Left cardiac atrium (tissue), 4 donors: ENCODE measurements at regions of chr12 and their contacts with region 1.

Region 1: DNA sequence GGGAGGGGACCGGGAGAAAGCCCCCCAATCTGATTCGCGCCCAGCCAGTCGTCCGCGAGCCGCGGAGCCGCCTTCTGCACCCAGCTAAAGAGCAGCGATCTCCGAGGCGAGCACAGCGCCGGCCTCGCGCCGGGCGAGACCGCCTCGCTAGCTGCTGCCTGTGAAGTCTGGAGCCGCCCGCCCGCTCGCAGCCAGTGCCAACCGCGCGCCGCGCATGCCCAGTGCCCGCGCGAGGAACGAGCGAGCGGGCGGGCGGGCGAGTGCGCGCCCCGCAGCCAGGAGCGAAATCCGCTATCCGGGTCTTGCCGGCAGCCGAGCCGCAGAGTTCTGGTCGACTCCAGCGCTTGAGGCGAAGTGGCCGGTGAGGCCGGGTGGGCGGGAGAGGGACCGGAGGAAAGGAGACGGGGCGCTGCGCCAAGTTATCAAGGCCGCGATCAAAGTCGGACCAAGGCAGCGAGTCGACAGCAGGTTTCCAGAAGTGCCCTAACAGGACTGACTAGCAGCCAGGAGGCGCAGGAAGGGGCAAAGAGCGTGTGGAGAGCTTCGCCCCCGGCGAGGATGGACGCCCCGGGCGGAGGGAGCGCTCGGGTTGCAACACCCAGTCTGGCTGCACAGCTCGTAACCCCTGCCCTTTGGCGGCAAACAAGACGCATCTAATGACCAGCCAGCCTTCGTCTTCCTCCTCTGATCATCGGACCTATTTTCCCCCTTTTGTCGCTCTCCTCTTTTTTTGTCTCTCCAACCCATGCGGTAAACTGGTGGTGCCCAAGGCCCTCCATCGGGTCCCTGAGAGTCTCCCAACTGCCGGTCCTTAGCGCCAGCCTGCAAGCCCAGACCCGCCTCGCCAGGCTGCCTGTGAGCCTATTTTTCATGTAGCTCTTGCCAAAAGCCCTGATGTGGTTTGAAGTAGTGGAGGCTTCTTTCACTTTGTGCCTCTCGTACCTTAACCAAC is at the start of gene EPS8:
- DNase-seq: peak; percentile 92
- ATAC-seq: peak; percentile 96 to 97
- total RNA-seq, gene EPS8: 46.0 to 46.9 TPM

Region 2: GRCh38 chr12:15599266-15600037 is 190.0 kb before region 1 on chr12:
- intact Hi-C with region 1: loop called in 1 of 2 experiments (anchors 5 kb)
- DNase-seq: peak; percentile 39
- ATAC-seq: peak; percentile 94 to 96

Region 3: DNA sequence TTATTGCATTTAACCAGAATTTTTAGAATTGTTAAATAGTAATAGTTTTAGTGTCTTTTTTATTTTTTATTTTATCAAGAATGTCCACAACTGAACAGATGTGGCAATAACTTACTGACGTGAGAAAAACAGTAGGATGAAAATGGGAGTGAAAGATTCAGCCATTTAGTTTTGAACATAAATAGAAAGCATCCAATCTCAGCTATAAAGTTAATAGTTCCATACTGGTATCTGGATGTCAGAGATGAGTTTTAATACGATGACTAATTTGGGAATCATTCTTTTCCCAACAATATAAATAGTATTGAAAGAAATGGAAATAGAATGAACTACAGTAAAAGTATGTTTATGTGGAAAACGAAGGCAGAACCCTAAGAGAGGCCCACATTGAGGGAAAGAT is 159.7 kb before region 1 on chr12:
- intact Hi-C with region 1: loop called in 1 of 2 experiments (anchors 10 kb)
- DNase-seq: no peak
- ATAC-seq: no peak

Region 4: DNA sequence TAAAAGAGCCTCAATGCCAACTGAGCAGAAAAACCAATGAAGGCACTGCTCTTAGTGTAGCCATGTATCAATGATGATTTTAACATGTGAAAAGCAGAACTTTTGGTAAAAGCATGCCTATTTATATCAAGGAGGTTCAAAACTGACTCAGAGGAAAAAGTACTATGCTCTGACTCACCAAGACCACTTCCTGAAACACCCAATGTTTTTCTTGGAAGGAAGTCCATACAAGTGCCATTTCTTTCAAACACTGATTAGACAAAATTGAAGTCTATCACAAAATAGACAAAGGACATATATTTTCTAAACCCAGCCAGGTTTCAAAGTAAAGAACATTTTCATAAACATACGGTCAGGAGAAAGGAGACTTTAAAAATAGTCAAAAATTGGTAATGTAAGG is 88.9 kb before region 1 on chr12:
- intact Hi-C with region 1: loop called in 1 of 2 experiments (anchors 5 kb)
- DNase-seq: no peak
- ATAC-seq: peak; percentile 70 to 92

Region 5: DNA sequence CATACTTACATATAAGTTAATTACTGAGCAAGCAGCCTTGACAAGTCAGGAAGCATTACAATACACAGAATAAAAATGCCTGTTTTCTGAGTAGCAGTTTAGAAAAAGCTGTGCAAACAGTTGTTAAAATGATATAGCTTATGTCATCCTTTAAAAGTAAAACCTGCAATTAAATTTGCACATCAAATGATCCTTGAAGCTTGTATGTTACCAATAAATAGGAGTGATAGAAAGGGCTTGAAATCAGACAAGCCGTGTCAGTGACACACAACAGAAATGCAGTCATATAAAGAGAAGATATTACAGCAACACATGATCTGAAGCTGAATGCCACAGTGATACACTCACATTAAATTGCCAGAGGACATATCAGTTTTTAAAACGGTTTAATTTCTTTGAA is 70.3 kb before region 1 on chr12:
- intact Hi-C with region 1: no loop called
- DNase-seq: no peak
- ATAC-seq: no peak

Region 6: DNA sequence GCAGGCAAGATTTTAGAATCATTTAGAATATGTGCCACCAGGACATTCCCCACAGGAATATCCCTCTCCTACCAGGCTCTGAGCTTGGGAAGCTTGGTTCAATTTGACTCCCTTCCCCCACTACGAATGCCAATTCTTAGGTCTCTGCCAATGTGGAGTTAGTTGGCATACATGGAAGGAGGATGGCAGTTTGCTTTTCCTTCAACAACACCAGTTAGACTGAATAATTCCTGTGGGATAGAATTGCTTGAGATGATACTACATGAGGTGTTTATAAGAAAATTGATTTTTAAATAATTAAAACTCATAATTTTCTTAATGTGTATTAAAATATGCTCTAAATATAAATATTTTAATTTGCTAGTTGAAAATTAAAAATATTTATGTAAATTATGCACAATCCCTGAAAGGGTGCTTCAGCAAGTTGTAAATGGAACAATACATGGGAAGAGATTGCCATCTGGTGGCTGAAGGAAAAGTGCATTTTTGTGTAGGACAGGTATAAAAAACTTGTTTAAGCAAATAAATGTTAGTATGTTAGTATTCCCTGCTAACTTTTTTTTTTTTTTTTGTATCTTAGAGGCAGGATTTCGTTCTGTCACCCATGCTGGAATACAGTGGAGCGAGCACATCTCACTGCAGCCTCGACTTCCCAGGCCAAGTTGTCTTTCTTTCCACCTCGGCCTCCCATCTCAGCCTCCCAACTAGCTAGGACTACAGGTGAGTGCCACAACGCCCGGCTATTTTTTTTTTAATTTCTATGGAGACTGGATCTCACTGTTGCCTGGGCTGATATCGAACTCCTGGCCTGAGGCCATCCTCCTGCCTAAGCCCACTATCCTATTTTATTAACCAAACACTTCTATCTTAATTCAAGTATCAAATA is 66.8 kb after region 1 on chr12:
- intact Hi-C with region 1: loop called in 1 of 2 experiments (anchors 5 kb)
- DNase-seq: no peak
- ATAC-seq: peak; percentile 70 to 75